ENCODE measurements at regions of chr7 and their contacts with region 1.

Region 1: GRCh38 chr7:2471396-2471795 is 4.8 kb downstream of the GRIFIN start:
- DNase-seq: peak; percentile 55
- ATAC-seq: peak; percentile 33
- H3K4me3 Mint-ChIP-seq: no peak overlapping the region
- H3K27ac Mint-ChIP-seq: no peak overlapping the region
- H3K4me1 Mint-ChIP-seq: peaks cover 31% of the 10 kb centered on the region
- H3K27me3 Mint-ChIP-seq: no peaks in the 10 kb centered on the region
- CTCF ChIP-seq: no peak

Region 2: GRCh38 chr7:2151245-2151644 is 320.2 kb before region 1 on chr7:
- CTCF ChIA-PET with region 1: no interaction called
- POLR2A ChIA-PET with region 1: no interaction called
- DNase-seq: no peak
- ATAC-seq: no peak
- H3K4me3 Mint-ChIP-seq: no peak overlapping the region
- H3K27ac Mint-ChIP-seq: peak overlapping the region; percentile 72
- H3K4me1 Mint-ChIP-seq: peaks cover 10% of the 10 kb centered on the region
- H3K27me3 Mint-ChIP-seq: no peaks in the 10 kb centered on the region
- CTCF ChIP-seq: no peak

Region 3: GRCh38 chr7:2384354-2385243 is 86.8 kb before region 1 on chr7:
- CTCF ChIA-PET with region 1: interaction called, 15 read pairs
- POLR2A ChIA-PET with region 1: no interaction called
- DNase-seq: no peak
- ATAC-seq: peak; percentile 13
- H3K4me3 Mint-ChIP-seq: no peak overlapping the region
- H3K27ac Mint-ChIP-seq: peak overlapping the region; percentile 65; the same call in 1 of the 2 replicates
- H3K4me1 Mint-ChIP-seq: peaks cover 9% of the 10 kb centered on the region
- H3K27me3 Mint-ChIP-seq: no peaks in the 10 kb centered on the region
- CTCF ChIP-seq: no peak

Region 4: DNA sequence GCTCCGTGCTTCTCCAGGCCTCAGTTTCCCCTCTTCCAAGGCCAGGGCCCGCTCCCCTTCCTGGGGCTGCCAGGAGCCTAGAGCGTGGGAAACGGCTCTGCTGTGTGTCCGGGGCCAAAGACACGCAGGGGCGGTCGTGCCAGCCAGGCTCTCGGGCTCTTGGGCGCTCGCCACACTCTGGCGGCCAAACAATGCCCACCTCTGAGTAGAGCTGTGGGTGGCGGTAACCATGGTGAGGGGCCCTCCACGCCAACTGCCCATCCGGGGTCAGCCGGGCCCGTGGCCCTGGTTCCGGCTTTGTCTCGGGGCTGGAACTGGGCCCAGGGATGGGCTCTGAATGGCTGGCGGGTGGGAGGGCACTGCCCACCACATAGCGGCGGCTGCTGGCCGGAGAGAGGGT is 11.2 kb before region 1 on chr7:
- CTCF ChIA-PET with region 1: interaction called, 56 read pairs
- POLR2A ChIA-PET with region 1: interaction called, 7 read pairs
- DNase-seq: no peak
- ATAC-seq: no peak
- H3K4me3 Mint-ChIP-seq: no peak overlapping the region
- H3K27ac Mint-ChIP-seq: no peak overlapping the region
- H3K4me1 Mint-ChIP-seq: no peaks in the 10 kb centered on the region
- H3K27me3 Mint-ChIP-seq: no peaks in the 10 kb centered on the region
- CTCF ChIP-seq: no peak

Region 5: DNA sequence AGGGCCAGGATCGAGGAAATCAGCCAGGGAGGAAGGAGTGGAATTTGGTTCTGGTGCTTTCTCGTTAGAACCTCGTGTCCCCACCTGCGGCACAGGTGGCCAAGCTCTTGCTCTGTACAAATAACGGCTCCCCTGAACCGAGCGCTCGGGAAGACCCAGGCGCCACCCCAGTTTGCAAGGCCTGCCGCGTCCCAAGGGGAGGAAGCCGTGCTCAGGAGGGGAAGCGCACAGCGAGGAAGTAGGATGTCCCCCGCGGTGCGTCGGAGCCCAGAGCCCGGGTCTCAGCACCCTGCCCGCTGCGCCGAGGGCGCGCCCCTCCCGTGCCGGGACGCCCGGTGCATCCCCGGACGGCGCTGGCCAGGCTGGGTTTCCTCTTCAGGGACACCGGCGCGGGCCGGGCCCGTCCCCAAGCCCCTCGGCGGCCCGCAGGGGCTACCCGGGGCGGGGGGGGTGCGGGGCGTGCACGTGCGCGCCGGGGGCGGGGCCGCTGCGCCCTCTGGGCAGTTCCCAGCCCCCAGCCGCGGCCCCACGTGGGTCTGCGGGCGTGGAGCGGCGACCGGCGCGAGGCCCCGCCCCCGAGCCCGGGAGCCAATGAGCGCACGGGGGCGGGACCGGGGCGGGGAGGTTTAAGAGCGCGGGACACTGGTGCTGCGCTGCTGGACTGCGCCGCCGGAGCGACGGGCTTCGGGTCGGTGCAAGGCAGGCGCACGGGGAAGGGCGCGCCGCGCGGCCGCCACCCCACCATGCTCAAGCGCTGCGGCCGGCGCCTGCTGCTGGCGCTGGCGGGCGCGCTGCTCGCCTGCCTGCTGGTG is 47.9 kb after region 1 on chr7 and contains the start of gene LFNG:
- CTCF ChIA-PET with region 1: interaction called, 65 read pairs
- POLR2A ChIA-PET with region 1: interaction called, 3 read pairs
- DNase-seq: peak; percentile 81
- ATAC-seq: peak; percentile 75
- H3K4me3 Mint-ChIP-seq: peak within 1 kb of the TSS; percentile 85
- H3K27ac Mint-ChIP-seq: no peak within 1 kb of the TSS
- H3K4me1 Mint-ChIP-seq: peaks cover 45% of the 10 kb centered on the region
- H3K27me3 Mint-ChIP-seq: peaks cover 24% of the 10 kb centered on the region
- CTCF ChIP-seq: no peak
- total RNA-seq, gene LFNG: 24.1 to 29.4 TPM (median 26.5 TPM) in 3 replicates

Region 6: GRCh38 chr7:2608921-2609411 is 137.6 kb after region 1 on chr7:
- CTCF ChIA-PET with region 1: interaction called, 14 read pairs
- POLR2A ChIA-PET with region 1: interaction called, 4 read pairs
- DNase-seq: peak; percentile 73
- ATAC-seq: peak; percentile 63
- H3K4me3 Mint-ChIP-seq: no peak overlapping the region
- H3K27ac Mint-ChIP-seq: peak overlapping the region; percentile 22; the same call in 1 of the 2 replicates
- H3K4me1 Mint-ChIP-seq: peaks cover 20% of the 10 kb centered on the region
- H3K27me3 Mint-ChIP-seq: no peaks in the 10 kb centered on the region
- CTCF ChIP-seq: no peak

Region 7: DNA sequence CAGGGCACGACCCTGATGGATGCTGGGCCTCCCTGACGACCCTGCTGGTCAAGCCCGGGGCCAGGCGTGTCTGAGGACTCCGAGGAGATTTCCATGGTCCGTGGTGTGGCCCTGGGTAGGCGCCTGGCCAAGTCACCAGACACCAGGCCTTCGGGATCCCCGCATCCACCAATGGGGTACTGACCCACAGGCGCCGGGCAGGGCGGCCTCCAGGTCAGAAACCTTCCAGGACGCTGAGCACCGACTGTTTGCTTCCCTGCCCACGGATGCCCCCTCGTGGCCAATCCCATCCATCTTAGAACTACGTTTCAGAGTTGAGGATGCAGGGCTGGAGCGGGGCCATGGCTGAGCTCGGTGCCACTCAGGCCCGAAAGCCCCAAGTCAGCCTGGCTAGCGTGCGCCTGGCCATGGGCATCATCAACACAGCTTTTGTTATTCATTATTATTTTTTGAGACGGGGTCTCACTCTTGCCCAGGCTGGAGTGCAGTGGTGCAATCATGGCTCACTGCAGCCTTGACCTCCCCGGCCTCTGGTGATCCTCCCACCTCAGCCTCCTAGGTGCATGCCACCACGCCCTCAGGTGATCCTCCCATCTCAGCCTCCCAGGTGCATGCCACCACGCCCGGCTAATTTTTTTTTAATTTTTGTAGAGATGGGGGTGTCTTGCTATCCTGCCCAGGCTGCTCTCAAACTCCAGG is 209.5 kb after region 1 on chr7:
- CTCF ChIA-PET with region 1: interaction called, 20 read pairs
- POLR2A ChIA-PET with region 1: no interaction called
- DNase-seq: peak; percentile 89
- ATAC-seq: peak; percentile 90
- H3K4me3 Mint-ChIP-seq: no peak overlapping the region
- H3K27ac Mint-ChIP-seq: no peak overlapping the region
- H3K4me1 Mint-ChIP-seq: no peaks in the 10 kb centered on the region
- H3K27me3 Mint-ChIP-seq: peaks cover 2% of the 10 kb centered on the region
- CTCF ChIP-seq: peak; percentile 69